ENCODE measurements at regions of chr10 and their contacts with region 1.

Region 1: DNA sequence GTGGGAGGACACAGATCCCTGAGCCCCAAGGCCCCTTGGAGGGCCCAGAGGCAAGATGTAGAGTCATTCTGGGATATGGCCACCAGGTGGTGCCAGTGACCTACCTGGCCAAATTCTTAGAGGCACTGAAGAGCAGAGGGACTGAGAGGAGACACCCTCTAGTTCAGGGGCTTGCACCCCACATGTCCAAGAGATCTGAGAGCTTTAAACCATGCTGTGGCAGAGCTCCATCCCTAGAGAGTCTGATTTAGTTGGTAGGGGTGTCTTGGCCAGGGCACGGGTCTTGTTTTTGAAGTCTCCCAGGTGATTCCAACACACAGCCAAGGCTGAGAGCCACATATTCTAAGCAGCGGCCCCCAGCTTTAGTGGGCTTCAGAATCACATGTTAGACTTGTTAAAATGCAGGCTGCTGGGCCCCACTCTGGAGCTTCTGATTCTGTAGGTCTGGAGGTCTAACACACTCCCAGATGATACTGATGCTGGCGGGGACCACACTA is 52.5 kb downstream of the PRF1 start:
- DNase-seq: no peak
- H3K4me3 ChIP-seq: no peak overlapping the region
- H3K27ac ChIP-seq: no peak overlapping the region
- H3K4me1 ChIP-seq: no peaks in the 10 kb centered on the region
- H3K27me3 ChIP-seq: no peaks in the 10 kb centered on the region
- CTCF ChIP-seq: peak; percentile 87 to 95 (median 92)
- POLR2A ChIP-seq: no peak

Region 2: DNA sequence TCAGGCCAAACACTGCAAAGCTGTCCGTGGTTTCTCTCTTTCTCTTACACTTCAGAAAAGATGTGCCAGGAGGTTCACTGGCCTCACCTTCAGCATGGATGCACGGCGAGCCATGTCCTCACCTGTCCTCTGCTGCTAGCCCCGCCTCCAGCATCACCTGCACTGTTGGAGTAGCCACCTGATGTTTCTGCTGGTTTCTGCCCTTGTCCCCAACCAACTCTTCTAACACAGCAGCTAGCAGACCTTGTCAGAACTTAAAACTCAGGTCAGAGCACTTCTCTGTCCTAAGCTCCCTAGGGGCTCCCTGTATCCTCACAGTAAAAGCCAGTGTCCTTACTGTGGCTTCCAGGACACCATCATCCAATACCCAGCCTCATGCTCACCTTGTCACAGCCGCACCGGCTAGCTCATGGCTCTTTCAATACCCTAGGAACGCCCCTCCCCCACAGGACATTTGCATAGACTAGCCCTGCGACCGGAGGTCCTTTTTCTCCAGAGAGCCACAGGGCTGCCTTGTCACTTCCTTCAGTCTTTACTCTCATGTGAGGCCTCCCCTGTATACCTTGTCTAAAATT is 56.3 kb before region 1 on chr10:
- intact Hi-C with region 1: no loop called
- DNase-seq: no peak
- H3K4me3 ChIP-seq: no peak overlapping the region
- H3K27ac ChIP-seq: no peak overlapping the region
- H3K4me1 ChIP-seq: no peaks in the 10 kb centered on the region
- H3K27me3 ChIP-seq: no peaks in the 10 kb centered on the region
- CTCF ChIP-seq: no peak
- POLR2A ChIP-seq: no peak

Region 3: GRCh38 chr10:70758757-70759514 is 208.9 kb after region 1 on chr10:
- intact Hi-C with region 1: loop called (anchors 2 kb)
- DNase-seq: no peak
- H3K4me3 ChIP-seq: no peak overlapping the region
- H3K27ac ChIP-seq: no peak overlapping the region
- H3K4me1 ChIP-seq: no peaks in the 10 kb centered on the region
- H3K27me3 ChIP-seq: no peaks in the 10 kb centered on the region
- CTCF ChIP-seq: peak; percentile 61 to 69 (median 65)
- POLR2A ChIP-seq: no peak

Region 4: DNA sequence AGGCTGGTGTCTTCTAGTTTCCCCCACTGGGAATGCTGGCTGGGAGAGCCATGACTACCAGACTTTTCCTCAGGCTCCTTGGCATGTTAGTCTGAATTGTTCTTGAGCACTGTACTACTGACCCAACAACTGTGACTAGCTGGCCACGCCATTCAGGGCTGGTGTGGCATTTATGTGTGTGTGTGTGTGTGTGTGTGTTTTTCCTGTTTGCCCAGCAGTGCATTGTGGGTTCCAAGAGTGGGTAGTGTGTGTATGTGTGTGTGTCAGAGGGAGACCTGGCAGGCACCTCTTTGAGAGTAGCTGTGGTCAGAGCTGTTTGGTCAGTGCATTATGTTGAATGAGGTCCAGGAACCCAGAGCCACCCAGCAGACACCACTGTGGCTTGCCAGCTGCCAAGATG is 329.2 kb after region 1 on chr10:
- intact Hi-C with region 1: loop called (anchors 5 kb)
- DNase-seq: no peak
- H3K4me3 ChIP-seq: no peak overlapping the region
- H3K27ac ChIP-seq: no peak overlapping the region
- H3K4me1 ChIP-seq: no peaks in the 10 kb centered on the region
- H3K27me3 ChIP-seq: no peaks in the 10 kb centered on the region
- CTCF ChIP-seq: no peak
- POLR2A ChIP-seq: no peak

Measured in vagina (tissue), 2 donors.